Lower leg skin (tissue), 4 donors: ENCODE measurements at regions of chr1 and their contacts with region 1.

Region 1: GRCh38 chr1:10430216-10431069 is at the start of gene CENPS:
- DNase-seq: peak; percentile 65 to 98
- H3K4me3 ChIP-seq: peak within 1 kb of the TSS; percentile 64
- CTCF ChIP-seq: peak in 2 of 3 donors; percentile 52 to 93
- POLR2A ChIP-seq: no peak
- total RNA-seq, gene CENPS: 0.42 to 1.8 (median 0.97) TPM

Region 2: GRCh38 chr1:10283318-10283984 is 147.0 kb before region 1 on chr1:
- intact Hi-C with region 1: no loop called
- DNase-seq: no peak
- H3K4me3 ChIP-seq: no peak overlapping the region
- CTCF ChIP-seq: no peak
- POLR2A ChIP-seq: no peak

Region 3: DNA sequence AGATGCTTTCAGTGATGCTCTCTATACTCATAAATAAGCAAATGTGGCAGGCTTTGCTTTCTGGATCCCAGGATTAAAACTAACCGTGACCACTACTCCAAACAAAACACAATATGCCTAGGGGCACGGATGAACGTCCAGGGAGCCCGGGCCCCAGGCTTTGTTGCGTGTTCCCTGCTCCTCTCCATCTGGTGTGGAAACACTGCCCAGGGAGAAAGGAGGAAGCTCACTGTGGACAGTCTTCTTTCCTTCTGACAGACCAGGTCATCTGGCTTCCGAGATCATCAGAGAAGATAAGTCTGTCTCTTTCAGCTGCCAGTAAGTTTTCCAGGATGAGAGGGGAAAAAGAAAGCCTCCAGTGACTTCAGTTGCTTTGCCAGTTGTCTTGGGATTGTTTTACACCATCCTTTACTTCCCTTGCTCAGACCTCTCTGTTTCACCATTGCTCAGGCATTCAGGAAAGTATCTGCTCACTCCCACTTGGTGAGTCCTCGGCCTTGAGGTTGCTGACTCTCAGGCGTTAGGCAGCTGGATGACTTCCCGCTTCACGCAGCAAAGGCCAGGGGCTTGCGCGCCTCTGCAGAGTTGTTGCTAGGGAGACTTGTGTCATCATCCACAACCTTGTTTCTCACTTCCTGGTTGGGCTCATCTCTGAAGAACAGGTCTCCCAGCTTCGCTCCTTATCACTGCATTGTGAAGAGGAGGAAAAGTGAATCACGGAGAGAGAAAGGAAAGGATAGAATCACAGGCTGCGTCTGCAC is 52.2 kb before region 1 on chr1:
- intact Hi-C with region 1: loop called (anchors 2 kb)
- DNase-seq: no peak
- H3K4me3 ChIP-seq: no peak overlapping the region
- CTCF ChIP-seq: no peak
- POLR2A ChIP-seq: no peak

Region 4: DNA sequence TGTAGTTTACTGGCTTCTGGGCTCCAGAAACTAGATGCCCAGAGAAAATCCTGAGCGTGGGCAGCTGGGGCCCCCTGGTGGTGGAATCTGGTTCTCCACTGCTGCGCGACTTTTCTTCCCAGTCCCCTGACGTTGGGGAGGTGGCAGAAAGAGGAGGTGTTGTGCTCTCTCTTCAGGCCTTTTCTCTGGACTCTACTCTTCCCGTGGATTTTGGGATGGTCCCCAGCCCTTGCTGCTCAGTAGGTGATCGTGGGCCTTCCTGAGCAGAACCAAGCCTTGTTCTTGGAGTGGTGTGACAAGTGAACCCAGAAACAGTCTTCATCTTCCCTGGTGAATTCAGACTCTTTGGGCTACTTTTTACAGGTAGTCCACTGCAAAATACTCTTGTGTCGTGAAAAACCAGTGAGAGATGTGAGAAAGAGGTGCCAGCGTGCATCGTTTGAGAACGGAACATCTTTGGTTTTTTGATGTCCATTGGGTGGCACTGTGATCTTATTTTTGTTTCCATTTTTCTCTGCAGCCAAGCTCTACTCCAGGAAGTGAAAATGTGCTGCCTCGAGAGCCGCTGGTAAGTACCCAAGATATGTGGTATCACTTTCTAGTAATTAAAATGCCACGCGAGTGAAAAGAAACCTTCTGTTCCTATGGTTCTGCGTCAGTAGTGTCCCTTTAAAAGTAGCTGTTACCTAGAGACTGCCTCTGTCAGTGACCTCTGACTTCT is 64.5 kb after region 1 on chr1:
- intact Hi-C with region 1: loop called (anchors 5 kb)
- DNase-seq: peak; percentile 65 to 96
- H3K4me3 ChIP-seq: no peak overlapping the region
- CTCF ChIP-seq: peak in 1 of 3 donors; percentile 46
- POLR2A ChIP-seq: no peak